Activated B cell treated with CpG ODN at 0.5 μM for 24 hours (primary cell): ENCODE measurements at regions of chr12 and their contacts with region 1.

Region 1: GRCh38 chr12:92408072-92408900 is 262.6 kb upstream of the BTG1 start:
- DNase-seq: no peak
- ATAC-seq: peak; percentile 42
- H3K4me3 Mint-ChIP-seq: peak overlapping the region; percentile 50
- H3K27ac Mint-ChIP-seq: peak overlapping the region; percentile 88
- H3K4me1 Mint-ChIP-seq: peaks cover 68% of the 10 kb centered on the region
- H3K27me3 Mint-ChIP-seq: no peaks in the 10 kb centered on the region
- CTCF ChIP-seq: no peak

Region 2: GRCh38 chr12:91811481-91812287 is 596.6 kb before region 1 on chr12:
- CTCF ChIA-PET with region 1: interaction called, 12 read pairs
- POLR2A ChIA-PET with region 1: interaction called, 3 read pairs
- intact Hi-C with region 1: loop called (anchors 1 kb)
- DNase-seq: peak; percentile 57
- ATAC-seq: peak; percentile 71
- H3K4me3 Mint-ChIP-seq: no peak overlapping the region
- H3K27ac Mint-ChIP-seq: no peak overlapping the region
- H3K4me1 Mint-ChIP-seq: peaks cover 7% of the 10 kb centered on the region
- H3K27me3 Mint-ChIP-seq: no peaks in the 10 kb centered on the region
- CTCF ChIP-seq: no peak

Region 3: DNA sequence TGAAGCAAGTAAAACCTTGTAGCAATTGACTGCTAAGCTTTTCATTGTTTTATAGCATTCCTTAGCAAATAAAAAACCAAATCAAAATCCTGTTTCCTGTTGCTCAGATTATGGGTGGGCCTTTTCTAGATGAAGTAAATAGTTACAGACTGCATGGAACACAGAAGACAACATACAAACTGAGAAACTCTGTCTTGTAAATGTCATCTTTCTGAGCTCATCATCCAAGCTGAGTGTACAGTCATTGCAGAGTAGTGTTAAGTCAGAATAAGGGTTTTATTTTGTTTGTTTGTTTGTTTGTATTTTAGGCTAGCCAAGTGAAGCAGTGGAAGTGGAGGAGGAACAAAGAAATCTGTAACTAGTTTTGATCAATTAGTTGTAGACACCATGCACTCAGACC is 238.2 kb before region 1 on chr12:
- CTCF ChIA-PET with region 1: interaction called, 14 read pairs
- POLR2A ChIA-PET with region 1: interaction called, 24 read pairs
- intact Hi-C with region 1: loop called (anchors 1 kb)
- DNase-seq: no peak
- ATAC-seq: no peak
- H3K4me3 Mint-ChIP-seq: peak overlapping the region; percentile 6
- H3K27ac Mint-ChIP-seq: peak overlapping the region; percentile 74
- H3K4me1 Mint-ChIP-seq: peaks cover 72% of the 10 kb centered on the region
- H3K27me3 Mint-ChIP-seq: no peaks in the 10 kb centered on the region
- CTCF ChIP-seq: no peak

Region 4: DNA sequence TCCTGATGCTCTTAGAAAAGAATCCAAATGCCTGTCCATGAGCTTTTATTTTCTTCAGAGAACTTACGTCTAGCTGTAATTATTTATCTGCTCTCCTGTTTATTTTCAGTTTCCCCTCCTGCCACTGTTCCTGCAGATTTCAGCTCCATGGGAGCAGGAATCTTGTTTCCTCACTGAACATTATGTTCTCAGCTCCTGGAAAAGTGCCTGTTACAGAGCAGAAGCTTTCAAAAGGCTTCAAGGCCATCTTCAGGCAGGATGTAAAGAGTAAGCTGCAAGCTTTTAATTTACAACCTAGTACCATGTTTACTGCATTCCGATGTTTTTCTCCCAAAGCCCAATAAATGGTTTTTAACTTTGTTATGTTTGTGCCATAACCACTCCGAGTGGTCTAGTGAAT is 164.2 kb before region 1 on chr12:
- CTCF ChIA-PET with region 1: no interaction called
- POLR2A ChIA-PET with region 1: no interaction called
- intact Hi-C with region 1: no loop called
- DNase-seq: no peak
- ATAC-seq: no peak
- H3K4me3 Mint-ChIP-seq: no peak overlapping the region
- H3K27ac Mint-ChIP-seq: no peak overlapping the region
- H3K4me1 Mint-ChIP-seq: no peaks in the 10 kb centered on the region
- H3K27me3 Mint-ChIP-seq: no peaks in the 10 kb centered on the region
- CTCF ChIP-seq: no peak

Region 5: DNA sequence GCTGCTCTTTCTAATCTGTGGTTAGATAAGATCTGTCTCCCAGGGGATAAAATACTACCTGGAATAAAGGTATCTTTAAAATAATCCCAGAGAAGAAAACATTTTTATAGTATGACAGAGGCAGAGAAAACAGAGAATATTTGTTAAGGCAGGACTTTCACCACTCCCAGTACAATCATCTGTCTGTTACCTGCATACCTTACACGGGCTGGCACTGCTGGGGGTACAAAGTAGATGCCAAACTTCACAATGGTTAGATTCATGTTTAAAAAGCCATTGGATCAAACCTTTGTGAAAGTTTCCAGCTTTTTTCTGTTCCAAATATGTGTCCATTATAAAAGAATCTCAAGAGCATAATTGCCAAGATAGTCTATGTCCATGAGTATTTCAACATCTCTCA is 10.9 kb after region 1 on chr12:
- CTCF ChIA-PET with region 1: interaction called, 5 read pairs
- POLR2A ChIA-PET with region 1: interaction called, 8 read pairs
- intact Hi-C with region 1: loop called (anchors 1 kb)
- DNase-seq: no peak
- ATAC-seq: no peak
- H3K4me3 Mint-ChIP-seq: no peak overlapping the region
- H3K27ac Mint-ChIP-seq: peak overlapping the region; percentile 79
- H3K4me1 Mint-ChIP-seq: peaks cover 49% of the 10 kb centered on the region
- H3K27me3 Mint-ChIP-seq: no peaks in the 10 kb centered on the region
- CTCF ChIP-seq: no peak

Region 6: DNA sequence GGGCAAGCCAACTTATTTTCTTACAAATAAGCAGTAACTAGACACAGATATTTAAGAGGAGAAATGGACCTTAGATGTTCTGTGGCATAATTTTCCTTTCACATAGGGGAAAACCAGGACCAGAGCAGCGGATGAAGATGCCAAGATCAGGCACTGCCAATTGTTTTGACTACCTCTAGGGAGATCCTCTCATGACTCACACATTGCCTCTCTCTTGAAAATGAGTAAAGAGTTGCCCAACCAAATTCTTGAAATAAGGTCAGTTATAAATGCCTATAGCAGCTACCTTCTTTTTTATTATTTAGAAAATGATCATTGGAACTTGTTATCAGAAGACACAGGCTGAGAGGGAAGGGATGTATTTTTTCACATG is 31.1 kb after region 1 on chr12:
- CTCF ChIA-PET with region 1: interaction called, 3 read pairs
- POLR2A ChIA-PET with region 1: interaction called, 12 read pairs
- intact Hi-C with region 1: no loop called
- DNase-seq: no peak
- ATAC-seq: peak; percentile 51
- H3K4me3 Mint-ChIP-seq: peak overlapping the region; percentile 62
- H3K27ac Mint-ChIP-seq: peak overlapping the region; percentile 97
- H3K4me1 Mint-ChIP-seq: peaks cover 99% of the 10 kb centered on the region
- H3K27me3 Mint-ChIP-seq: no peaks in the 10 kb centered on the region
- CTCF ChIP-seq: no peak

Region 7: DNA sequence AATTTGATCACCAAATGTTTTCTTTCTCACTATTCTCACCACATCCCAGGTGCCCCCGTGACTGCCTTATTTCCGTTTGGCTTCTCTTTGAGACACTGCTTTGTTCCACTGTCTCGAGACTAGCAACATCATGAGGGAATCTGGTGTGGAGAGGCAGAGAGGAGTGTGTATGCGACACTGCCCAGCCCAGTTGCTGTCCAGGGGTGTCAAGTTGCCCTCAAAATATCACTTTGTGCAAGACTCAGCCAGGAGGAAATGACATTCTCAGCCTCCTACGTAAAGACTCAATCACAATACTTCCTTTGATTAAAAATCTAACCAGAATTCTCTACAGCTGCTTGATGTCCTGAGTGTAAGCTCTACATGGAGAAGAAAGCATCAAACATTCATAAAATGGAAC is 569.0 kb after region 1 on chr12:
- CTCF ChIA-PET with region 1: no interaction called
- POLR2A ChIA-PET with region 1: no interaction called
- intact Hi-C with region 1: no loop called
- DNase-seq: no peak
- ATAC-seq: no peak
- H3K4me3 Mint-ChIP-seq: peak overlapping the region; percentile 20
- H3K27ac Mint-ChIP-seq: peak overlapping the region; percentile 36
- H3K4me1 Mint-ChIP-seq: peaks cover 39% of the 10 kb centered on the region
- H3K27me3 Mint-ChIP-seq: no peaks in the 10 kb centered on the region
- CTCF ChIP-seq: no peak